ENCODE measurements at regions of chr5 and their contacts with region 1.

Region 1: GRCh38 chr5:147188200-147189108 is 46.4 kb upstream of the STK32A start:
- DNase-seq: peak in 2 of 5 donors; percentile 25 to 29
- ATAC-seq: peak in 1 of 4 donors; percentile 75
- H3K4me3 ChIP-seq: peak overlapping the region in 4 of 12 donors; percentile 14 to 27 (median 26)
- H3K27ac ChIP-seq: no peak overlapping the region
- H3K4me1 ChIP-seq: no peaks in the 10 kb centered on the region
- H3K27me3 ChIP-seq: peaks cover 0 to 14% (median 0%) of the 10 kb centered on the region in 9 donors
- CTCF ChIP-seq: peak; percentile 76 to 94 (median 83)
- POLR2A ChIP-seq: no peak

Region 2: GRCh38 chr5:146533260-146533857 is 655.1 kb before region 1 on chr5:
- intact Hi-C with region 1: loop called in 4 of 10 experiments (anchors 2 to 5 kb)
- DNase-seq: peak in 4 of 5 donors; percentile 34 to 48 (median 41)
- ATAC-seq: peak in 2 of 4 donors; percentile 52 to 62
- H3K4me3 ChIP-seq: no peak overlapping the region
- H3K27ac ChIP-seq: no peak overlapping the region
- H3K4me1 ChIP-seq: no peaks in the 10 kb centered on the region
- H3K27me3 ChIP-seq: peaks cover 0 to under 1% (median 0%) of the 10 kb centered on the region in 9 donors
- CTCF ChIP-seq: peak; percentile 60 to 83 (median 70)
- POLR2A ChIP-seq: no peak

Region 3: DNA sequence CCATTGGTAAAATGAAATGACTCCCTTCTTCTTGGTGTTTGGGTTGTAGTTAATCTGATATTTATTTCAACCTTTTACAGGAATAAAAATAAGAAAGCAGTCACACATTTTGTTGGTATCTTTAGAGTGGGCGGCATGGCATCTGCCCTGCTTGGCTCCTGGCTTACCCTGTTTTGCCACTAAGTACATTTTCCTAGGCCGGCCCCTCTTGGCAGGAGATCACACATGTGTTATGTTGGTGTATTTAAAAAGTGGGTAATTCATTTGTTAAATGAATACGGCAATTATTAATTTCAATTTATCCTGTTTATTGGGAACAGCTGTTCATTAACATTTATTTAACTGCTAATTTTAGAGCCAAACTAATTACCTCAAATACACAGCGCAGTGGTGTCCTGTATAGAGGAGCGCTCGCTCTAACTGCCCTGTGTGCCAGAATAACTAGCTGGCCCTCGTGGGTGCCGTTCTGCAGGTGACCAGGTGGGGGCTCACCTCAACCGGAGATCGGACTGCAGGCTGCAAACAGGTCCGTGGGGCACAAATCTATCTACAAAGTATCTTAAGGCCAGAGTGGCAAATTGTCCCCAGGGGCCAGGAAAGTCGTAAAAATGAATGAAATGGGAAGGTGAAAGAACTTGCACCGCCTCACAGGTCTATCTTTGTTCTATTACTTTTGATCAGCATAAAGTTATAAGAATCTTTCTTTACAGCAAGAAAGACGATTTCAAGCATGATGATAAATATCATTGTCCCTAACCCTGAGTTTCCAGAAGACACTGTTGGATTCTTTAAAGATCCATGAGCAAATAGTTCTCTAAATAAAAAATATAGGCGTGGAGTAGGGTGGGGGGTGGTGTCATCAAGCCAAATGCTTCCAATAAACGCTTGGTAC is 646.2 kb before region 1 on chr5:
- intact Hi-C with region 1: loop called in 6 of 10 experiments (anchors 5 kb)
- DNase-seq: peak; percentile 51 to 76 (median 59)
- ATAC-seq: peak in 3 of 4 donors; percentile 73 to 87 (median 86)
- H3K4me3 ChIP-seq: no peak overlapping the region
- H3K27ac ChIP-seq: no peak overlapping the region
- H3K4me1 ChIP-seq: peaks cover 0 to 8% (median 0%) of the 10 kb centered on the region in 12 donors
- H3K27me3 ChIP-seq: peaks cover 0 to 4% (median 0%) of the 10 kb centered on the region in 9 donors
- CTCF ChIP-seq: peak; percentile 60 to 81 (median 74)
- POLR2A ChIP-seq: no peak

Region 4: DNA sequence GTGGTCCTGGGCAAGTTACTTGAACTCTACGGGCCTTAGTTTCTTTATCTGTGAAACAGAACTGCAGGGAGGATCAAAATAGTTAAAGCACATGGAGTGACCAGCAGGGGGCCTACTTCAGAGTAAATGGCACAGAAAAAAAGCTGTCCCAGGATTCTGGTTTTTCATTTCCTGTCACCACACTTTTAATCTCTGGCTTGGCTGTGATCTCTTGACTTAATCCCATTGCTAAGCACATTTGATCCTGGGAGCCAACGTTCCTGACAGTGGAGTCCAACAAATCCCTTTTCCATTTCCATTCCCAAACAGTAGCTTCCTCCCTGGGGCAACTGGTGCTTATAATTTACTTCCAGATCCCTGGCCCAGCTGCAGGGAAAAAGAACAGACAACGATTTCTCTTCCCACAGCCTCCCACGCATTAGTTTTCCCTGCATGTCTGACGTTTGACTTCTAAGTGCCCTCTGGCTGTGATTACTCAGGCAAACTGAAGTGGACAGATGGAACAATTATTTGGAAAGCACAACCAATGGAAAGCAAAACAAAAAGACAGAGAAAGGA is 90.1 kb before region 1 on chr5:
- intact Hi-C with region 1: loop called in 3 of 10 experiments (anchors 5 to 10 kb)
- DNase-seq: peak in 3 of 5 donors; percentile 18 to 30 (median 27)
- ATAC-seq: peak in 3 of 4 donors; percentile 52 to 72 (median 60)
- H3K4me3 ChIP-seq: no peak overlapping the region
- H3K27ac ChIP-seq: peak overlapping the region in 1 of 12 donors; percentile 20
- H3K4me1 ChIP-seq: peaks cover 0 to 11% (median 5%) of the 10 kb centered on the region in 12 donors
- H3K27me3 ChIP-seq: peaks cover 0 to 5% (median 0%) of the 10 kb centered on the region in 9 donors
- CTCF ChIP-seq: peak; percentile 25 to 56 (median 44)
- POLR2A ChIP-seq: no peak

Measured in heart left ventricle (tissue), 16 donors.